GM13976 (cell line): ENCODE measurements at regions of chr21 and their contacts with region 1.

Region 1: DNA sequence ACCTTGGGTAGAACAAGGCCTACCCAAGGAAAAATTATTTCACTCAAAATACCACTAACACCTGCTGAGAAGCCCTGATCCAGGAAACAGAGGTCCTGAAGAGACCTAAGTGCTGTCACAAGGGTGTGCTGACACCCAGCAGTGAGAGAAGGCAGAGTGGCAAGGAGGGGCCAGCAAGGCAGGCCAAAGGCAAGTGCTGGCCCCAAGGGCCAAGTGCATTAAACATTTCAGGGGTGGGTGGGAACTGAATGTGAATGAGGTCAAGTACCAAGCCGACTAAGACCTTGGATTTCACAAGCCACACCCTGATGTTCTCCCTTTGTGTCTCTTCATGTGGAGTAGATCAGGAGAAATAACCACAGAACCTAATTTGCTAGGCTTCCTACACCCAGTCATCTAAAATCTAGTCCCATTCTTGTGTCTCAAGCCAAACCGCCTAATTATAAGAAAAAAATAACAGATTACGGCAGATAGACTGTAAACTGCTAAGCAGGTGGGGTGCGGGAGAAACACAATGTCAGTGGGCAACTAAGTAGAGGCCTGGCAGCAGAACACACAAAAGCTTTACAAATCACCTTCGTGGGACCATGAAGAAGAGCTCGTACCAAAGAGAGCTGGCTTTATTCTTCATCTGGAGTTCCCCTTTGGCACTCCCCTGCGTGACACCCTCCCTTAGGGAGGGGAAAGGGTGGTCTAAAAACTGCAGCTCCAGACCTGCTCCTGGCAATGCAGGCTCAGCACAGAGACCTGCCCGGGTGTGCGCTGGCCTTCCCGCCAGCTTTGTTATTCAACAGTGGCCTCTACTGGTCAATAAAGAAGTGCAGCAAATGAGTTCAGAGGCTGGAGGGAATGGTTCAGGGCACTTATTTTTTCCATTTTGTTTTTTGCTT is 8.7 kb downstream of the UBE2G2 start:
- DNase-seq: peak; percentile 81
- CTCF ChIP-seq: peak; percentile 64

Region 2: GRCh38 chr21:44347911-44348753 is 444.8 kb before region 1 on chr21:
- in situ Hi-C with region 1: loop called (anchors 10 kb)
- DNase-seq: no peak
- CTCF ChIP-seq: no peak

Region 3: DNA sequence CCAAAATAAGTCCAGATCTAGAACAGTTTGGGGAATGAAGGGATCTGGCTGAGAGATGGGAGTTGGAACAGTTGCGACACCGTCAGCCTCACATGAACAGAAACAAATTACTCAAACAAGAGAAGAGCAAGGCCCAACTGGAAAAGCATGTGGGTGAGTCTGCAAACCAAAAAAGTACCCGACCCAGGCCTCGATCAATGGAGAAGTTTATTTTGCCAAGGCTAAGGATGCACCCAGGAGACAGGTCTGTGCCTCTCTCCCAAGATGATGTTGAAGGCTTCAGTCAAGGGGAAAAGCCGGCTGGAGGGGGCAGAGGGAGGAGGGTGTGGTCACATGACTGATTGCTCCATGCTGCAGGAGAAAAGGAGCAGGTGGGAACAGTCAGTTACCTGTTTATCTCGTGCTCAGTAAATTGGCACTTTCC is 295.2 kb before region 1 on chr21:
- in situ Hi-C with region 1: loop called (anchors 10 kb)
- DNase-seq: no peak
- CTCF ChIP-seq: no peak

Region 4: DNA sequence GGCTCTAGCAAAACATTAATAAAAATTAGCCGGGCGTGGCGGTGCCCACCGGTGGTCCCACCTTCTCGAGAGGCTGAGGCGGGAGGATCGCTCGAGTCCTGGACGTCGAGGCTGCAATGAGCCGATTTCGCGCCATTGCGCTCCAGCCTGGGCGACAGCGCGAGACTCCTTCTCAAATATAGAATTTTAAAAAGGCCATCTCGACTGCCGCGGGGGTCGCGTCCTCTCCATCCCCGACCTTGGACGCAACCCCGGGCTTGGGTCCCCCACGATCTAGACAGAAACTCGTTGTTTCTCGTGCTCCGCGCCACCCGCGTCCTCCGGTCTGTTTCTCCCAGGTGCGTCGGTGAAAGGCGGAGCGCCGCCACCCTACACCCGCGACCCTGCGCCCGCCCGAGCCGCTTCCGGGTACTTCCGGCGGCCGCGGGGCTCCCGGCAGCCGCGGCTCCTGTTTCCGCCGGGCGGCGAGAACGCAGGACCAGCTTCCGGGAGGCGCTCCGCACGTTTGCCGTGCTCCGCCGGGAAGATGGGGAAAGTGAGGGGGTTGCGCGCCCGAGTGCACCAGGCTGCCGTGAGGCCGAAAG is 146.7 kb after region 1 on chr21 and contains the start of gene SLX9:
- in situ Hi-C with region 1: loop called (anchors 10 kb)
- DNase-seq: peak; percentile 95
- CTCF ChIP-seq: no peak